Astrocyte of the cerebellum (primary cell): ENCODE measurements at regions of chr9 and their contacts with region 1.

Region 1: DNA sequence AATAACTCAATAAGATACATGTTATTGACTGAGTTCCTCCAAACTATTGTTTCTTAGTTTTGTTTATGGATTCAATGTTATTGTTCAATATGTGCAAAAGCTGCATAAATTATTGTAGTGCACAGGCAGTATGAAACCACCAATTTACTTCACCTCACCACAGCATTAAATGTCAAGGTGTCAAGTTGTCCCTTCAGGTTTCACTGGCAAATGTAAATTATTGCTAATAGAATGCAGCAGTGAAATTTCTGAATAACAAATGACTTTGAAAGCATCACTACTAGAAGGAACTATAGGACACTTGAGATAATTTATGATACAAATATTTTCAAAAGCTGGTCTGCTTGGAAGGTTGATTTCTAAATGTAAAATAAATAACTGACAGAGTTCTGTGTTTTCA is 116.4 kb upstream of the PTPRD start:
- DNase-seq: no peak
- H3K4me3 ChIP-seq: no peak overlapping the region
- CTCF ChIP-seq: no peak

Region 2: DNA sequence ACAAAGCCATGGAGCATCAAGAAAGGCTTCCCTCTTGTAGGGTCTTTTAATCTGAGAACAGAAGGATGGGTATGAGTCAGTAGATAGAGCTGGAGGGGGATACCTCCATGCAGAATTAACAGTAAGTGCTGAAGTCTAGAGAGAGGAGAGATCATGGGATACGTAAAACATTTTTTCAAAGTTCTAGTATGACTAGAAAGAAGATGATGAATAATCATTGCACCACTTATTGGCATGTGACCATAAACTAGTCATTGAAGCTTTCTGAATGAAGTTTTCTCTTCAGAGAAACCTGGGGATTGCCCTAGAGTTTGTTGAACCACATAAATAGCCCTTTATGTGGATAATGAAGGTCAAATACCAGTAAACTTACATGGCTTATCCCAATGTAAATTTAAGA is 67.8 kb before region 1 on chr9:
- in situ Hi-C with region 1: no loop called
- DNase-seq: no peak
- H3K4me3 ChIP-seq: no peak overlapping the region
- CTCF ChIP-seq: no peak

Region 3: GRCh38 chr9:10678790-10679189 is 50.4 kb before region 1 on chr9:
- in situ Hi-C with region 1: loop called (anchors 5 kb)
- DNase-seq: peak; percentile 56
- H3K4me3 ChIP-seq: no peak overlapping the region
- CTCF ChIP-seq: no peak